HEK293T (cell line): ENCODE measurements at regions of chr7 and their contacts with region 1.

Region 1: GRCh38 chr7:102279537-102280400 is 6.9 kb upstream of the SH2B2 start:
- DNase-seq: peak; percentile 84

Region 2: GRCh38 chr7:102306875-102307677 is 27.3 kb after region 1 on chr7:
- CTCF ChIA-PET with region 1: no interaction called
- POLR2A ChIA-PET with region 1: no interaction called
- DNase-seq: no peak

Region 3: GRCh38 chr7:102326157-102326889 is 46.6 kb after region 1 on chr7:
- CTCF ChIA-PET with region 1: no interaction called
- POLR2A ChIA-PET with region 1: no interaction called
- DNase-seq: no peak

Region 4: GRCh38 chr7:102390697-102391484 is 111.1 kb after region 1 on chr7:
- CTCF ChIA-PET with region 1: interaction called, 10 read pairs
- POLR2A ChIA-PET with region 1: interaction called, 3 read pairs
- DNase-seq: peak; percentile 79